ENCODE measurements at regions of chr6 and their contacts with region 1.

Region 1: DNA sequence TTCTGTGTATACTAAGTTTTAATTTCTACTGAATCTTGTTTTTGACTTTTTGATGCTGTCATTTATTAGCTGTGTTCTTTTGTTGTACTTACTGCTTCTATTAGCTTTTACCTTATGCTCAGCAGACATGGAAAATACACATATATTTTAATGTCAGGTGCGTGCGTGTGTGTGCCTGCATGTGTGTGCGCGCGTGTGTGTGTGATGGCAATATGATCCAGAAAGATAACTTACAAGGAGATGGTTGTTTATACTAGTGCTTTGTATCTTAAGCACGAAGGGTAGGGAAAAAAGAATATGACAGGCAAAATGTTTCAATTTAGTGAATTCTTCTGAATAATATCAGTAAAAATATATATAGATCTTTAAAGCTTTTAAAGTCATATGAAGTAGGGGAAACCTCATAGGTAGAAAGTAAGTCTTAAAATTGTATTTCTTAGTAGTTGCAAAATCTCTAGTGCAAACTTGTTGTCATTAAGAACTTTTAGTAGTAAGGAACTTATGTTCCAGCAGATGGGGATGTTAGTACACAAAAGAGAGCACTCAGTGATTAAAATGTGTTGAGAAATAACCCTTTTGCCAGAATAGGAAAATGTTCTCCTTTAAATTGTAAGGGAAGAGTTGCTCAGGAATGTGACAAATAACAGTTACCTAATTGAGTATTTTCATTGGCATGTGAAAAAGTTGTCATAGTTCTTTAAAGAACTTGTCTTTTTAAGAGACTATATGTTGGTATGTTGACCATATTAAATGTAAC is 13.2 kb downstream of the QKI start:
- DNase-seq: no peak
- H3K4me3 Mint-ChIP-seq: no peak overlapping the region
- H3K27ac Mint-ChIP-seq: no peak overlapping the region
- H3K4me1 Mint-ChIP-seq: peaks cover 64% of the 10 kb centered on the region
- H3K27me3 Mint-ChIP-seq: no peaks in the 10 kb centered on the region
- CTCF ChIP-seq: no peak

Region 2: DNA sequence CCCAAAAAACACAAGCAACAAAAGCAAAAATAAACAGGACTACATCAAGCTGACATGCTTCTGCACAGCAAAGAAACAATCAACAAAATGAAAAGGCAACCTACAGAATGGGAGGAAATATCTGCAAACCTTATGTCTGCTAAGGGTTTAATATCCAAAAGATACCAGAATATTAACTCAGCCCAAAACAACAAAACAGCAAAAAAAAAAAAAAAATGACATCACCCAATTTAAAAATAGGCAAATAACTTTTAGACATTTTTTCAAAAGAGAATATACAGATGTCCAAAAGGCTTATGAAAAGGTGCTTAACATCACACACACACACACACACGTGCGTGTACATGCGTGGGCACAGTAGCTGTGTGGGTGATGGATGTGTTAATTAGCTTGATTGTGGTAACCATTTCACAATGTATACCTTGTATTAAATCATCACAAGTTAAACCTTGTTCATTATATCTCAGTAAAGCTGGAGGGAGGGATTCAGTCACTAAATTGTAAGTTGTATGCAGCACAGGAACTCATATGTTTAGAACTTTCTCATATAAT is 39.2 kb after region 1 on chr6:
- CTCF ChIA-PET with region 1: no interaction called
- intact Hi-C with region 1: loop called (anchors 5 kb)
- DNase-seq: no peak
- H3K4me3 Mint-ChIP-seq: no peak overlapping the region
- H3K27ac Mint-ChIP-seq: no peak overlapping the region
- H3K4me1 Mint-ChIP-seq: peaks cover 25% of the 10 kb centered on the region
- H3K27me3 Mint-ChIP-seq: no peaks in the 10 kb centered on the region
- CTCF ChIP-seq: no peak

Region 3: DNA sequence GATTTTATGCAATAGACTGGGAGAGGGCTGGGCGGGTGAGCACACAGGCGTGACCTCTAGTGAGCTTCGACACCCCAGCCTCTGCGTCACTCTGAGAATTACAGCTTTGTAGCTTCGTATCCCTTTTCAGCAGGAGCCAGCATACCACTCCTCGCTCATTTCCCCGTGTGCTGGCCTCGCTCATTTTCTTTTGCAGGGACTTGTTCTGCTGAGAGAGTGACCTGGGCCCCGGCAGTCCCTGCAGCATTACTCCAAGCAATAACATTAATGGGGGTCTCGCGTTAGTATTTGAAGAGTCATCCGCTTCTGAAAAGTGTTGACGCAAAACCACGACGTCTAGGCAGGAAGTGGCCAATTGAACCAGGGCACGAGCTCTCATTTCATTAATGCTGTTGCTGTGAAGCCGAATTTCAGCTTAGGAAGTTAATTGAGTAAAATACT is 180.5 kb after region 1 on chr6:
- CTCF ChIA-PET with region 1: no interaction called
- intact Hi-C with region 1: no loop called
- DNase-seq: no peak
- H3K4me3 Mint-ChIP-seq: no peak overlapping the region
- H3K27ac Mint-ChIP-seq: no peak overlapping the region
- H3K4me1 Mint-ChIP-seq: no peaks in the 10 kb centered on the region
- H3K27me3 Mint-ChIP-seq: no peaks in the 10 kb centered on the region
- CTCF ChIP-seq: no peak

Region 4: DNA sequence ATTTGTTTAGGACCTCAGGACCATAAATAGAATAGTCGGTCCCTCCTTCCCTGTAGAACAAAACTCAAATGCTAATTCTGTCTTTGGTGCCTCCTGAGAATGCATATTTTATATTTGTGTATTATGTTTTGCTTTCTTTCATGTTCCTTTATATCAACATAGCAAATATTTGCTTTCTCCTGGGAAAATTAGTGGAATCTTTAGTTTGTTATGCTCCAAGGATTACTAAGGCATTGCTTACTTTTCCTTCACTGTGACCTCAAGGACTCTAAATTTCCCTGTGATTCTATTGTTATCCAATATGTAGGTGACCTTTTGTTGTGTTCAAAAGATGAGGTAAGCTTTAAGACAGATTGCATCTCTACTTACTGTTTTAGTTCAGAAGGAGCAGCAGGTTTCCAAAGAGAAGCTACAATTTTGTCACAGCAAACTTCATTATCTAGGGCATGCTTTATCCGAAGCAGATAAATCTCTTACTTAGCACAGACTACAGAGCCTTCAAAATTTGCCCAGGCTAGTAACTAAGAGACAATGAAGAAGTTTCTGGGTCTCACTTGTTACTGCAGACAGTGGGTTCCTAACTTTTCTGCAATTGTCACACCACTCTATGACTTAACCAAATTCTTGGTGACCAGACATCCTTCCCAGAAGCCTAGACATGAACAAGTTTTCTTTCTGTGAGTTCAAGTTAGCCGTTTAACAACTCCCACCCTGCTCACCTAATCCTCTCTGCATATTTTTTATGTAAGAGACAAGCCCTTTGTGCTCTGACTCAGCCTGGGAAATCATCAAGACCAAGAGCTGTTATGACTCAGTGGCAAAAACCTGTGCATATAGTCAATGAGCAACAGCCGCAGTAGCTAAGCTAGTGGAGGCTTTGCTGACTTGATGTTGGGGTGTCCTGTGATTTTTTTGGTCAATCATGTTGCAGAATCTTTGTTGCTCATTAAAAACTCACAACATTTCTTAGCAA is 365.6 kb after region 1 on chr6:
- CTCF ChIA-PET with region 1: no interaction called
- intact Hi-C with region 1: loop called (anchors 10 kb)
- DNase-seq: peak; percentile 35
- H3K4me3 Mint-ChIP-seq: no peak overlapping the region
- H3K27ac Mint-ChIP-seq: no peak overlapping the region
- H3K4me1 Mint-ChIP-seq: peaks cover 18% of the 10 kb centered on the region
- H3K27me3 Mint-ChIP-seq: no peaks in the 10 kb centered on the region
- CTCF ChIP-seq: no peak

Region 5: DNA sequence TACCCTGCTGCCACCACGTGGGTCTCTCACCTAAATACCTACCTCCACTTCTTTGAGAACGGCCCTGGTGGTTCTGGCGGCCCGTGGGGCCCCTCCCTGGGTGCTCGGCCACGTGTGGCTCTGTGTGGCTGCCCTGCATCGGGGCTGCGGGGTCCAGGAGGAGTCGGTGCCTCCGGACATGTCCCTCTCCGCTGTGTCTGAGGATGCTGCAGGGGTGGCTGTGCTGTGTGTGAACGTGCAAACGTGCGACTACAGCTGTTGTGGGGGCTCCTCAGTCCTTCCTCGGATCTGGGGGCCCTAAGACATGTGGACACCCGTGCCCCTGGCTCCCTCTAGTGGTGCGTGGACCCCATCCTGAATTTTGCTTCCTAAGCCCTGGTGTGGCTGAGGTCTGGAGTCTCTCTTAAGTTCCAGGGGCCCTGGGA is 678.7 kb after region 1 on chr6:
- CTCF ChIA-PET with region 1: no interaction called
- intact Hi-C with region 1: loop called (anchors 10 kb)
- DNase-seq: peak; percentile 28
- H3K4me3 Mint-ChIP-seq: no peak overlapping the region
- H3K27ac Mint-ChIP-seq: no peak overlapping the region
- H3K4me1 Mint-ChIP-seq: no peaks in the 10 kb centered on the region
- H3K27me3 Mint-ChIP-seq: no peaks in the 10 kb centered on the region
- CTCF ChIP-seq: no peak

Region 6: GRCh38 chr6:164379795-164380194 is 952.1 kb after region 1 on chr6:
- CTCF ChIA-PET with region 1: no interaction called
- intact Hi-C with region 1: loop called (anchors 10 kb)
- DNase-seq: no peak
- H3K4me3 Mint-ChIP-seq: no peak overlapping the region
- H3K27ac Mint-ChIP-seq: peak overlapping the region; percentile 86
- H3K4me1 Mint-ChIP-seq: peaks cover 23% of the 10 kb centered on the region
- H3K27me3 Mint-ChIP-seq: no peaks in the 10 kb centered on the region
- CTCF ChIP-seq: no peak

Region 7: DNA sequence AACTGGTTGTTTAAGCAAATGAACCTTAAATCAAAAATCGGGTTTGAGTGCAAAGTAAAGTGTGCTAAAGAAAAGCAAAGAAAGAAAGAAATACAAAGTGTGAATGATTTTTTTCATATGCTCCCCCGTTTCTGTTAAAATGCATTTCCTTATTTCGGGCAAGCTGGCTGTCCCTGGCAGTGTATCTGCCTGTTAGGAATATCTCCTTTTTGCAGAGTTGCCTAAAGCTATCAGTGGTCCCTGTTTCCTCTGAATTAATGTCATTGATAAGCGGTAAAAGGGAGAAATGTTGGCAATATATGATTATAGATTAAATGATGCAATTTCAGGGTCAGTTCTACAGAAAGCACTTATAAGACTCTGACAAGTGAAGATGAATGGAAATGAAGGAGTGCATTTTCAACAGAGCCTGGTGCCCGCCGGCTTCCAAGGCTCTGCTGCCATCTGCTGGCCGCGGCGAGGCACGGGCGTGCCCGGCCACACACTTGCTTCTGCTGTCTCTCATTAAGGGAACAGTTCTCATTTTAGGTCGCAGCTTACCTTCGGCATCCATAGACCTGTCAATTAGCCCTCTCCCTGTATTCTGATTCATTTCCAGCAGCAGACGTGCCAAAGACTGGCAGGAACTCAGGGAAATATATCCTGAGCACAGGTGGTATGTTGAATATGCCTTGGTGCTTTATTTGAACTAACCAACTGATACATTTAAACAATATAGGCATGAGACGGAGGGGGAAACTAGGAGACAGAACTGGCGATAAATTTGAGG is 1499.8 kb after region 1 on chr6:
- CTCF ChIA-PET with region 1: no interaction called
- intact Hi-C with region 1: loop called (anchors 2 kb)
- DNase-seq: peak; percentile 79
- H3K4me3 Mint-ChIP-seq: no peak overlapping the region
- H3K27ac Mint-ChIP-seq: no peak overlapping the region
- H3K4me1 Mint-ChIP-seq: no peaks in the 10 kb centered on the region
- H3K27me3 Mint-ChIP-seq: no peaks in the 10 kb centered on the region
- CTCF ChIP-seq: peak; percentile 91

Measured in Calu3 (cell line).